ENCODE measurements at regions of chr13 and their contacts with region 1.

Region 1: DNA sequence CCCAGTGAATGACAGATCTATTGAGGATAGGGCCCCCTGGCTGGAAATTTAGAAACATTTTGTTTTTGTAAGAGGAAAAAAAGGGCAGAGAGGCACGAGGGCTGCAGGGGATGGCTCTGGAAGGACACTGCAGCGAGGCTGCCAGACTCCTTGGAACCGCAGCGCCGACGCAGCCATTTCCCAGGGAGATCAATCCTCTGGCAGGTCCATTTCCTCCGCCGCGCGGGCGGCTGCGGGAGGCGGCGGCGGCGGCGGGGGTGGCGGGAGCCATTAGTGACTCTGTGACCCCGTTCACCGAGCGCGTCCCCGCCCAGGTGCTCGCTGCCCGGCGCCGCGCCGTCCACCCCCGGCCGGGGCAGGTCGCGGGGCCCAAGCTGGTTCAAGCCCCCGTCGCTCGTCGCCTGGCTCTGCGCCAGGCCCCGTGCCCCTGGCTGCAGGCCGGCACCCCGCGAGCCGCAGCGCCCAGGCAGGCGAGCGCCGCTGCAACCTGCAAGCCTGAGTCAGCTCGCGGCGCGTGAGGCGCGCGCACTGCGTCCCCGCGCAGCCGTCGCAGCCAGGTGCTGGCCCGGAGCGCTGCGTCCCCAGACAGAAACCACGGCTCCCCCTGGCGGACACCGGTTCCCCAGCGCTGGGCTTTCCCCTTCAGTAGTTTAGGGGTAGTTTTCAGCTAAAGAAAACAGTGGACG is 192.6 kb downstream of the KATNAL1 start:
- DNase-seq: peak; percentile 95
- H3K4me3 ChIP-seq: peak overlapping the region; percentile 54
- H3K27ac ChIP-seq: peak overlapping the region; percentile 70
- H3K4me1 ChIP-seq: peaks cover 9% of the 10 kb centered on the region
- H3K27me3 ChIP-seq: no peaks in the 10 kb centered on the region
- CTCF ChIP-seq: peak; percentile 89

Region 2: GRCh38 chr13:29508130-29508875 is 606.4 kb before region 1 on chr13:
- intact Hi-C with region 1: loop called (anchors 5 kb)
- DNase-seq: peak; percentile 86
- H3K4me3 ChIP-seq: no peak overlapping the region
- H3K27ac ChIP-seq: no peak overlapping the region
- H3K4me1 ChIP-seq: peaks cover 8% of the 10 kb centered on the region
- H3K27me3 ChIP-seq: no peaks in the 10 kb centered on the region
- CTCF ChIP-seq: peak; percentile 97

Region 3: DNA sequence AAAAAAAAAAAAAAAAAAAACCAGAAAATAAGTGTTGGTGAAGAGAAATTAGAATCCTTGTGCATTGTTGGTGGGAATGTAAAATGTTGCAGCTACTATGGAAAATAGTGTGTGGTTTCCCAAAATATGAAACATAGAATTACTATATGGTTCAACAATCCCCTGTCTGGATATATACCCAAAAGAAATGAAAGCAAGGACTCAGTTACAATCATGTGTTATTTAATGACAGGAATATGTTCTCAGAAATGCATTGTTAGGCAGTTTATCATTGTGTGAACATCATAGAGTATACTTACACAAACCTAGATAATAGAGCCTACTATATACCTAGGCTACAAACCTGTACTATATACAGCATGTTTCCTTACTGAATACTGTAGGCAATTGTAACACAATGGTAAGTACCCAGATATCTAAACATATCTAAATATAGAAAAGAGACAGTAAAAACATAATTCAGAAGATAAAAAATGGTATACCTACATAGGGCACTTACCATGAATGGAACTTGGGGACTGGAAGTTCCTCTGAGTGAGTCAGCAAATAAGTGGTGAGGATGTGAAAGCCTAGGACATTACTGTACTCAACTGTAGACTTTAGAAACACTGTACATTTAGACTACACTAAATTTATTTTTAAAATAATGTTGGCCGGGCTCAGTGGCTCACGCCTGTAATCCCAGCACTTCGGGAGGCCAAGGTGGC is 493.5 kb before region 1 on chr13:
- intact Hi-C with region 1: no loop called
- DNase-seq: no peak
- H3K4me3 ChIP-seq: no peak overlapping the region
- H3K27ac ChIP-seq: no peak overlapping the region
- H3K4me1 ChIP-seq: no peaks in the 10 kb centered on the region
- H3K27me3 ChIP-seq: no peaks in the 10 kb centered on the region
- CTCF ChIP-seq: no peak

Region 4: DNA sequence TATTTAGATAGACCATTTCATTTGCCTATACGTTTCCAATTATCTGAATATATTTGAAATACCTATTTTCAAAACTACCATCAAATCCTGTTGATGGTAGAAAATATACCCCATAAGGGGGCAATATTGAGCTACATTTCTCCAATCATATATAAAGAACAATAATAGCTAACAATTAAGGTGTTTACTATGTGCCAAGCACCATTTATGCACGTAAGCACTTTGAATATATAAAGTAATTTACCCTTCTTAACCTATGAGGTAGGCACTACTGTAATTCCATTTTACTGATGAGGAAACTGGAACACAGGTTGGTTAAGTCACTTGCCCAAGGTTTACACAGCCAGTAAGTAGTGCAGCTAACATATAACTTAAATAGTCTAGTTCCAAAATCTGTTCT is 343.5 kb before region 1 on chr13:
- intact Hi-C with region 1: loop called (anchors 2 kb)
- DNase-seq: no peak
- H3K4me3 ChIP-seq: no peak overlapping the region
- H3K27ac ChIP-seq: no peak overlapping the region
- H3K4me1 ChIP-seq: no peaks in the 10 kb centered on the region
- H3K27me3 ChIP-seq: no peaks in the 10 kb centered on the region
- CTCF ChIP-seq: peak; percentile 36

Region 5: DNA sequence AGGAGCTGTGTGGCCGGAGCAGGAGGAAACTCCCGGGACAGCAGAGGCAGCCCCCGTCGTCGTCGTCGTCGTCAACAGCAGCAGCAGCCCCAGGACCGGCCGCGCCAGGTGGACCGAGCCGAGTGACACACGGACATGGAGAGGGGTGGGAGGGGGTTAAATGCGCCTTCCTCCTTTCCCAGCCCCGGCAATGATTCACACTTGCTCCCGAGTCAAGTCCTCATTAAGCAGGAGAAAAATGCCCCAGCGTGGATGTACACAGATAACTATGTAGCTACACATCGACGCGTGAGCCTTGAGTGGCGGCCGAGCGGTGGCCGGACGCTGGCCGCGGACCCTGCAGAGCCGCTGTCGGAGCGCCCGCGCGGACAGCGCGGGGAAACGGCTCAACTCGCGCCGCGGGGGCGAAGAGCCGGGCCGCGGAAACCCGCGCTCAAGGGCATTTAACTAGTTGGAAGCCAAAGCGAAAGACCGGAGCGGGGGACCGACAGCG is 264.9 kb before region 1 on chr13:
- intact Hi-C with region 1: loop called (anchors 5 kb)
- DNase-seq: peak; percentile 63
- H3K4me3 ChIP-seq: peak overlapping the region; percentile 84
- H3K27ac ChIP-seq: peak overlapping the region; percentile 99
- H3K4me1 ChIP-seq: peaks cover 5% of the 10 kb centered on the region
- H3K27me3 ChIP-seq: no peaks in the 10 kb centered on the region
- CTCF ChIP-seq: no peak

Region 6: GRCh38 chr13:29923554-29924481 is 190.9 kb before region 1 on chr13:
- intact Hi-C with region 1: loop called (anchors 5 kb)
- DNase-seq: peak; percentile 93
- H3K4me3 ChIP-seq: no peak overlapping the region
- H3K27ac ChIP-seq: peak overlapping the region; percentile 65
- H3K4me1 ChIP-seq: peaks cover 14% of the 10 kb centered on the region
- H3K27me3 ChIP-seq: no peaks in the 10 kb centered on the region
- CTCF ChIP-seq: peak; percentile 90